GM13977 (cell line): ENCODE measurements at regions of chr9 and their contacts with region 1.

Region 1: DNA sequence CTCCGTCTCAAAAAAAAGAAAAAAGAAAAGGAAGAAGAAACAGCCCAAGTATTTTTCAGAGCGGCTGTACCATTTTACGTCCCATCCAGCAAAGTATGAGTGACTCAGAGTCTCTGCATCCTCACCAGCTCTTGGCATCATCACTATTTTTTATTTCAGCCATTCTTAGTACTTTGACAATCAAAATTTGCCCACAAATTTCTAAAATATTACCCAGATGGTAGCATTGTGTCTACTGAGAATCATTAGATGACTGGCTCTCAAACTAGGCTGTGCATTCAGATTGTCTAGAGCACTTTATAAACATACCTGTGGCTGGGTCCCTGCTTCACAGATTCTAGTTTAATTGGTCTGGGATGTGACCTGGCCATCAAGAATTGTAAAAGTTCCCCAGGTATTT is 21.6 kb upstream of the MELK start:
- DNase-seq: no peak
- CTCF ChIP-seq: no peak

Region 2: DNA sequence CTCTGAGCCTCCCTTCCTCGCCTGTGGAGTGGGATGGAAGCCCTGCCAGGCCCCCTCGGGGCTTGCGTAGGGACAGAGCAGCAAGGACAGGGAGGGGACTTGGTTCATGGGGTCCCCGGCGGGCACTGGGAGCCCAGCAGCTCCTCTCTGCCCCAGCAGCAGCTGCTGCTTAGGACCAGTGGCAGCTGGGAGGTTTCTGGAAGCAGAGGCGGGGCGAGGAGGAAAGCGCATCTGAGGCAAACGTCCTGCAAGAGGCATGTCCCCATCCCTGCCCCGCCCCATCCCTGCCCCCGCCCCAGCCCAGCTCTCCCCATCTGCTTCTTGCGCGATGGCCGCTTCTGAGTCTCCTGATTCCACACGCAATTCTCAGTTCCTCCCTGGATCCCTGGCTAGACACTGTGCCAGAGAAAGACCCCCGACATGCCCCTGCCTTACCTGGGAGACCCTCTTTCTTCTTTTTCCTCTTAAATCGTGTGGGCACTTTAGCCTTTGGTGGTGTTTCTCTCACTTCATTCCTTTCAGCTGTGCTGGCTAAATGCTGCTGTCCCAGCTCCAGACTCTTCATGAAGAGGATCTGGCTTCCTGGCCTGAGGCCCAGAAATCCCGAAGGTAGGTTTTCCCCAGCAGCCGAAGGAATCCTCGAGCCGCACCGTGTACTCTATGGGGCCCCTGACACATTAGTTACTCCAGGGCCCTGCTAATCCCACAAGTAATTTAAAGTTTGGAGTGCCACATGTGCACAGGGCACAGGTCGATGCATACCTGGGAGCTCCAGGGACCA is 588.8 kb before region 1 on chr9:
- in situ Hi-C with region 1: no loop called
- DNase-seq: no peak
- CTCF ChIP-seq: no peak

Region 3: DNA sequence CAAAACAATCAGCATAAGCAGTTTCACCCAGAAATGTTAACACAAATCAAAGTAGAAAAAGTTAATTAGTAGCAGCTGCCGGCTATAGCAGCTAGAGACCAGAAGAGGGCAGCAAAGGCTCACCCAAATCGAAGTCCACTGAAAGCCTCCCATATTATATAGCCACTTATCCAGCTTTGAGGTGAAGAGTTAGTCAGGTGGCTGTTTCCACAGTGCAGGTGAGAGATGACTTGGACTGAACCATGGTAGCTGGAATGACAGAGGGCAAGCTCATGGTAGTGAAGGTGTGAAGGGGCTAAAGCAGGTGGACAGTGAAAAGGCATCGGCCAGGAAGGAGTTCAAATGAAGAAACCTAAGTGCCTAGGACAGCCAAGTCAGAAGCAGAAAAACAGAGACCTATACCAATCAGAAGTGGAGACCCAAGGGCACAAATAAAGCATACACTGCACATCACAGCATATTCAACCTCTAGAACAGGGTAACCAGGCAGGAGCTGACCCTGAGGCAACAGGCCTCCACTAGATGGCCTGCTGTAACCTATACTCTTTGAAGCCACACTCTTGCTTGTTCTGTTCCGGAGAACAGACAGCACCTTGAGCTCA is 143.9 kb before region 1 on chr9:
- in situ Hi-C with region 1: loop called (anchors 5 kb)
- DNase-seq: peak; percentile 53
- CTCF ChIP-seq: peak; percentile 85

Region 4: DNA sequence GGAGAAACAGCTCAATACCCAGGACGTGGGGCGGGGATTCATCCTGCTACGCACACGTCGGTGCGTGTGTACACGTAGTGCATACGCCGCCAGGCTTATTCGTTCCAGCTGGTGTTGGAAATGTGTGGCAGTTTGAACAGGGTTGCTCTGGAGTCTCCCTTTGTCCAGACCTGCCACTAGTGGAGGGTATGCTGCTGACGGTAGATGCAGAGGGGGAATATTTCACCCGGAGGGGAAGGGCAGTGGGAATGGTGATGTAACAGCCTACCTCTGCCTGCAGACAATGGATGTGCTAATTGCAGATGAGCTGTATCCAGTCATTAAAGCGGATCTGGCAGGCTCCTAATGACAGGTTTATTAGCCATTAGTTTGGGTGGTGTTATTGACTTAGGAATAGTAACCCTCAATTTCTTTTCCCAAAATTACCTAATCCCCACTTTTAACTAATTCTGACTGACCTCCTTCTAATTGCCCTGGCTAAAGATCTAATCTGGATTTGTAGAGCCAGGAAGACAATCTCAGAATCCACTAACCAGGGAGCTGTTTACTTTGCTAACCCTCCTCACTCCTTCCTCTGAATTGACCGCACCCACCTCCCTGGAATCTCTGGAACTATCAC is 340.3 kb after region 1 on chr9:
- in situ Hi-C with region 1: no loop called
- DNase-seq: no peak
- CTCF ChIP-seq: no peak

Region 5: GRCh38 chr9:37239224-37239859 is 688.2 kb after region 1 on chr9:
- in situ Hi-C with region 1: no loop called
- DNase-seq: no peak
- CTCF ChIP-seq: no peak